ENCODE measurements at regions of chr1 and their contacts with region 1.

Region 1: GRCh38 chr1:184973272-184974055 is 844 bp downstream of the NIBAN1 start:
- DNase-seq: no peak
- ATAC-seq: peak; percentile 73
- H3K4me3 ChIP-seq: peak overlapping the region; percentile 40 to 62
- H3K27ac ChIP-seq: peak overlapping the region; percentile 14; the same call in 1 of the 2 replicates
- H3K4me1 ChIP-seq: peaks cover 0 to 5% of the 10 kb centered on the region in 2 experiments; a peak in 1 of 4 replicates
- H3K27me3 ChIP-seq: no peaks in the 10 kb centered on the region
- CTCF ChIP-seq: no peak
- POLR2A ChIP-seq: no peak
- RAD21 ChIP-seq: no peak

Region 2: DNA sequence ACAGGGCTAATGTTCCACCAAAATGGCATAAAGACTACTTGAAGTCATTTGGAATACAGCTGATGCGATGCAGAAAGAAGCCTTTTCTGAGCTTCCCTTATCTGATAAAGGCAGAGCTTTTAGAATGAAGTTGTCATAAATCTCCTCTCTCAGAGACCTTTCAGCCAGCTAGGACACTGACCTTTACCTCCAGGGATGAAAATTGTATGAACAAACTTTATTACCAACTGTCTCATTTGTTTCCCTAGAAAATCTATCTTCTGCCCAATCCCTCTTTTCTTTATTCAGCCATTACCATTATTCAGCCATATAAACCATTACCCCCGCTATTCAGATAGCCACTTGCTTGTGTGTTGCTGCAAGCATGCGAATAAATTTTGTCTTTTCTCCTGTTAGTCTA is 42.2 kb after region 1 on chr1:
- CTCF ChIA-PET with region 1: no interaction called
- POLR2A ChIA-PET with region 1: no interaction called
- RAD21 ChIA-PET with region 1: no interaction called
- intact Hi-C with region 1: loop called (anchors 1 kb)
- DNase-seq: no peak
- ATAC-seq: no peak
- H3K4me3 ChIP-seq: no peak overlapping the region
- H3K27ac ChIP-seq: no peak overlapping the region
- H3K4me1 ChIP-seq: peaks cover 11 to 20% of the 10 kb centered on the region in 2 experiments
- H3K27me3 ChIP-seq: no peaks in the 10 kb centered on the region
- CTCF ChIP-seq: no peak
- POLR2A ChIP-seq: no peak
- RAD21 ChIP-seq: no peak